Sigmoid colon (tissue), 7 donors: ENCODE measurements at regions of chr9 and their contacts with region 1.

Region 1: DNA sequence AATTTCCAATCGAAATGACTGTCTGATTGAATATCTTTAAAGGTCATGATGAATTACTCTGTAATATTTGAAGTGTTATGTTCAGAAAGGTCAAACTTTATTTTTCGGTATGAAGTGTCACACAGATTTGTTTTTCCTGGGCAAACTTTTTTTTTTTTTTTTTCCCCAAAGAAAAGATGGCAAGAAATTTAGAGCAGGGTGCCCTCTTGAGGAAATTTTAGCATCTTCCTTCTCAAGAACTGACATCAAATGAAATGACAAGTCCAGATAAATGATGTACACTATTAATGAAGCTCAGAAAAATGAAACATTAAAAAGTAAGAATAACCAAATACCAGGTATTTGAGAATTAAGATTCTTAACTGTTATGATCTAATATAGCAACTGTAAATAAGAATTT is 123.6 kb downstream of the INVS start:
- DNase-seq: no peak
- H3K4me3 ChIP-seq: no peak overlapping the region
- H3K27ac ChIP-seq: no peak overlapping the region
- H3K4me1 ChIP-seq: no peaks in the 10 kb centered on the region
- H3K27me3 ChIP-seq: no peaks in the 10 kb centered on the region
- CTCF ChIP-seq: peak in 1 of 4 experiments; percentile 12
- EP300 ChIP-seq: no peak
- POLR2A ChIP-seq: no peak

Region 2: GRCh38 chr9:100028201-100028784 is 194.4 kb before region 1 on chr9:
- intact Hi-C with region 1: loop called (anchors 5 kb)
- DNase-seq: peak; percentile 73
- H3K4me3 ChIP-seq: no peak overlapping the region
- H3K27ac ChIP-seq: no peak overlapping the region
- H3K4me1 ChIP-seq: no peaks in the 10 kb centered on the region
- H3K27me3 ChIP-seq: no peaks in the 10 kb centered on the region
- CTCF ChIP-seq: peak; percentile 37 to 92 (median 77)
- EP300 ChIP-seq: no peak
- POLR2A ChIP-seq: no peak

Region 3: DNA sequence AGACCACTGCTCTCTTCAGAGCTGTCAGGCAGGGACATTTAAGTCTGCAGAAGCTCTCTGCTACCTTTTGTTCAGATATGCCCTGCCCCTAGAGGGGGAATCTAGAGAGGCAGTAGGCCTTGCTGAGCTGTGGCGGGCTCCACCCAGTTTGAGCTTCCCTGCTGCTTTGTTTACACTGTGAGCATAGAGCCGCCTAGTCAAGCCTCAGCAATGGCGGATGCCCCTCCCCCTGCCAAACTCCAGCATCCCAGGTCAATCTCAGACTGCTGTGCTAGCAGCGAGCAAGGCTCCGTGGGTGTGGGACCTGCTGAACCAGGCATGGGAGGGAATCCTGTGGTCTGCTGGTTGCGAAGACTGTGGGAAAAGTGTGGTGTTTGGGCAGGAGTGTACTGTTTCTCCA is 415.1 kb after region 1 on chr9:
- intact Hi-C with region 1: no loop called
- DNase-seq: no peak
- H3K4me3 ChIP-seq: no peak overlapping the region
- H3K27ac ChIP-seq: no peak overlapping the region
- H3K4me1 ChIP-seq: no peaks in the 10 kb centered on the region
- H3K27me3 ChIP-seq: no peaks in the 10 kb centered on the region
- CTCF ChIP-seq: no peak
- EP300 ChIP-seq: no peak
- POLR2A ChIP-seq: no peak